ENCODE measurements at regions of chr12 and their contacts with region 1.

Region 1: GRCh38 chr12:89461649-89462612 is 62.7 kb downstream of the GALNT4 start:
- DNase-seq: peak; percentile 82
- ATAC-seq: peak; percentile 85
- H3K4me3 ChIP-seq: peak overlapping the region; percentile 19; the same call in 1 of the 2 replicates
- H3K27ac ChIP-seq: 0 out of 2 replicates have a peak overlapping the region, but pooled peaks have one; percentile 5
- H3K4me1 ChIP-seq: peaks cover 24% of the 10 kb centered on the region
- H3K27me3 ChIP-seq: no peaks in the 10 kb centered on the region
- CTCF ChIP-seq: peak; percentile 76

Region 2: DNA sequence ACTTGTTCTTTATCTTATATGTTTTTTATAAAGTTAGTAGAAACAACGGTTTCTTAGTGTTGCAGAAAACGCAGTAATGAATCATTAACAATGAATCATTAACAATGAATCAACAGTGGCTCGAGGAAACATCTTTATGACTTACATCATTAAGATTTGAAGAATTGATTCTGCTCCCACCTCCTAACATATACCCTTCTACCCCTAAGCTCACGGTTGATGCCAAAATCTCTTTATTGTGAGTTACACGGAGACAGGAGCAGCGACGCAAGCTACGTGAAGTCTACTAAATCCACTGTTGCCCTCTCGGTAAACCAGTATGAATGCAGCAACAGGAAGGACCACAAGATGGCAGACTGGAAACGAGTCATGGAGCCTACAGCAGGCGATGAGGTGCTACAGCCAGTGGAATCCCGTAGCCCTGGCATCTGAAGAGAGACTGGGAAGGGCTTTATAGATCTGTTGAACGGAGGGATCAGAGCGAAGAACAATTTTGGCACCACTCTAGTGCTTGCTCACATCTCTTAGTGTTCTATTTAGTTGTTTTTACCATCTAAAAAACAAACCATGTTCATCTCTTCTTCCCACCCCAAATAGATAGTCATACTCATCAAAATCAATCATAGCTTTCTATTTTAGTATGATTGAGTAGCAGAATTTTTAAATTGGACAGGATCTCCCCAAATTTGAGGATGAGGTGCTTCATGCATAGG is 442.4 kb before region 1 on chr12:
- CTCF ChIA-PET with region 1: interaction called, 8 read pairs
- POLR2A ChIA-PET with region 1: interaction called, 4 read pairs
- intact Hi-C with region 1: loop called (anchors 1 kb)
- DNase-seq: peak; percentile 89
- ATAC-seq: peak; percentile 89
- H3K4me3 ChIP-seq: peak overlapping the region; percentile 64
- H3K27ac ChIP-seq: peak overlapping the region; percentile 12; the same call in 1 of the 2 replicates
- H3K4me1 ChIP-seq: peaks cover 17% of the 10 kb centered on the region
- H3K27me3 ChIP-seq: no peaks in the 10 kb centered on the region
- CTCF ChIP-seq: peak; percentile 99

Region 3: DNA sequence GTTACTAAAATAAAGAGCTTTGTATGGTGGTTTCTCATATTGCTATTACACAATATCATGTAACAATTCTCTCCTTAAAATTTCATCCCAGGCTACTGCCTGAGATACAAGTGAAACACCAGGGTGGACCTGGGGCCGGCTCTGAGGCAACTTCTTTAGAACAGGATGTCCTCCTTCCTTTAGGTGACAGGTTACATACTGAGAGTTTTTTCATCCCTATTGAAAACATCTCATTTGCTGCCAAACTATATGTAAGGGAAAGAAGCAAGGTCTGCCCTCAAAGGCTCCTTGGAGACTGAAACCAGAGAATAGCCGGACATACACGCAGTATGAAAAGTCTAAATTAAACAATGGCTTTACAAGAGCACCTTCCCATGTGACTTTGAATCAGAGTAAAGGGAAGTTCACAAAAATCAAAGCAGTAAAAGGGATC is 249.6 kb before region 1 on chr12:
- CTCF ChIA-PET with region 1: no interaction called
- POLR2A ChIA-PET with region 1: no interaction called
- intact Hi-C with region 1: loop called (anchors 10 kb)
- DNase-seq: peak; percentile 64
- ATAC-seq: peak; percentile 91
- H3K4me3 ChIP-seq: no peak overlapping the region
- H3K27ac ChIP-seq: peak overlapping the region; percentile 59
- H3K4me1 ChIP-seq: peaks cover 29% of the 10 kb centered on the region
- H3K27me3 ChIP-seq: no peaks in the 10 kb centered on the region
- CTCF ChIP-seq: no peak

Region 4: GRCh38 chr12:89352492-89353187 is 109.3 kb before region 1 on chr12 and contains the start of gene DUSP6:
- CTCF ChIA-PET with region 1: no interaction called
- POLR2A ChIA-PET with region 1: interaction called, 6 read pairs
- intact Hi-C with region 1: loop called (anchors 1 kb)
- DNase-seq: peak; percentile 99
- ATAC-seq: peak; percentile 67
- H3K4me3 ChIP-seq: peak within 1 kb of the TSS; percentile 98
- H3K27ac ChIP-seq: peak within 1 kb of the TSS; percentile 93
- H3K4me1 ChIP-seq: peaks cover 39% of the 10 kb centered on the region
- H3K27me3 ChIP-seq: no peaks in the 10 kb centered on the region
- CTCF ChIP-seq: no peak
- total RNA-seq, gene DUSP6: 184 and 244 TPM in 2 replicates